Mammary epithelial cell (primary cell): ENCODE measurements at regions of chr17 and their contacts with region 1.

Region 1: DNA sequence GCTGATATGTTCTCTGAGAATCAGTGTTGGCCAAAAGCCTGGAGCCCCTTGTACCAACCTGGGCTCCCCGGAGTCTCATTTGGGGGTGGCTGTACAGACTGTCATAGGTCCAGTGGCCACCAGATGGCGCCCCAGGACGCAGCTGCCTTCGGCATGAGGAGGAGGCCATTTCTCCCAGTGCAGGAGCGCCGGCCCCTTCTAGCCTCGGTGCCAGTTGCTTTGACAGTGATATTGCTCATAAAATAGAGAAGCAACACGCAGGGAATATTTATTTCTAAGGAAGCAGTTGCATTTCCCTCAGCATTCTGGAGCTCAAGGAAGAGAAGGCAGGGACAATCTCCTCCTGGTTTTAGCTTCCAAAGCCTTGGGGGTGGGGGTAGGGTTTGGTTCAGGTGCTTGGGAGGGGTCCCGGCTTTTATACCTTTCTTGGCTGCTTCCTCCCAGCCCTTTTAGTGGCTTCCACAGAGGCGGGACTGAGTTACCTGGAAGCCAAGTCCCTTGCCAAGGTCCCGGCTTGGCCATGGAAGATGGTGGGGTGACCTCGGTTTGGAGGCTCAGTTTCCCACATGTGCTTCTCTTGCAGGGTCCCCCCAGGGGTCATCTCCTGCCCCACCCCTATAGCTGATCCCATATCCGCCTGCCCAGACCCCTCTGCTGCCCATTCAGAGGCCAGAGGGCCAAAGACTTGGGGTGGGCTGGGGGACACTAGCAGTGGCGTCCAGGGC is 117.8 kb upstream of the CDC42EP4 start:
- DNase-seq: peak; percentile 59
- H3K4me3 ChIP-seq: no peak overlapping the region
- H3K27ac ChIP-seq: no peak overlapping the region
- H3K4me1 ChIP-seq: no peaks in the 10 kb centered on the region
- H3K27me3 ChIP-seq: no peaks in the 10 kb centered on the region
- CTCF ChIP-seq: peak; percentile 91 to 96

Region 2: GRCh38 chr17:73501431-73501830 is 71.8 kb after region 1 on chr17:
- CTCF ChIA-PET with region 1: no interaction called
- dilution Hi-C with region 1: no loop called
- in situ Hi-C with region 1: no loop called
- intact Hi-C with region 1: no loop called
- DNase-seq: peak; percentile 18
- H3K4me3 ChIP-seq: no peak overlapping the region
- H3K27ac ChIP-seq: no peak overlapping the region
- H3K4me1 ChIP-seq: no peaks in the 10 kb centered on the region
- H3K27me3 ChIP-seq: no peaks in the 10 kb centered on the region
- CTCF ChIP-seq: no peak

Region 3: GRCh38 chr17:73710095-73710592 is 280.5 kb after region 1 on chr17:
- CTCF ChIA-PET with region 1: no interaction called
- dilution Hi-C with region 1: loop called (anchors 25 kb)
- in situ Hi-C with region 1: loop called in 1 of 2 experiments (anchors 10 kb)
- intact Hi-C with region 1: loop called (anchors 1 kb)
- DNase-seq: peak; percentile 61
- H3K4me3 ChIP-seq: no peak overlapping the region
- H3K27ac ChIP-seq: no peak overlapping the region
- H3K4me1 ChIP-seq: peaks cover 25% of the 10 kb centered on the region
- H3K27me3 ChIP-seq: no peaks in the 10 kb centered on the region
- CTCF ChIP-seq: peak; percentile 81 to 86